Right ventricle myocardium inferior (tissue), 1 donor: ENCODE measurements at regions of chr5 and their contacts with region 1.

Region 1: DNA sequence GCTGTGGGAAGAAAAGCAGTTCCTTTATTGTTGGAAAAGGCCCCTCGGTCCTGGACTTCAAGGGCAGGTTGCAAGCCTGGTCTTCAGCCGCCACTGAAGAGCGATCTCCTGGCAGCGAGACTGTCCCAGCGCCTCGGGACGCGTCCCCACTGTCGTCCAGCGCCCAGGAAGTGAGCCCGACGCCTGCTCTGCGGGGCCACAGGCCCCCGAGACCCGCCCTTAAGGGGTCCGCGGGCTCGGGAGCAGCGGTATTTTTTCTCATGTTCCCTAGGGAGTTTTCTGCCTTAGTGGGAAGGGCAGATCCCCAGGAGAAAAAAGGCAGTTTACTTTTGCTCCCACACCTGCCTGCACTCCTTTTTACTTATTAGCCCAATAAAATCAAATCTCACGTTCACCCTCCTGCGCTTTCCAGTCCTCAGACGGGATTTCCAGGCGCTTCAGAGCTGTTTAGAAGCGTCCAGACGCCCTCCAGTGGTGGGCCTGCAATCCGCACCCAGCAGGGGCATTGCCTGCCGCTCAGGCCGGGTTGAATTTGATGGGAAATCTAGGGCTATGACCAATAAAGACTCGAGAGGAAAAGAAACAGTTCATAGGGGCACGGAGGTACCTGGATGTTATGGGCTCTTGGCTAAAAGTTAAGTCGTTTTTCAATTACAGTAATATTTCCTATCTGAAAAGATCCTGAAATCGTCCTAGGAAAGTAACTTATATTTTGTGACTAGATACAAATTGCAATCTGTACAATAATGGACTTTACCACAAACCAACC is 2.8 kb upstream of the EFNA5 start:
- DNase-seq: peak; percentile 82
- ATAC-seq: peak; percentile 70

Region 2: DNA sequence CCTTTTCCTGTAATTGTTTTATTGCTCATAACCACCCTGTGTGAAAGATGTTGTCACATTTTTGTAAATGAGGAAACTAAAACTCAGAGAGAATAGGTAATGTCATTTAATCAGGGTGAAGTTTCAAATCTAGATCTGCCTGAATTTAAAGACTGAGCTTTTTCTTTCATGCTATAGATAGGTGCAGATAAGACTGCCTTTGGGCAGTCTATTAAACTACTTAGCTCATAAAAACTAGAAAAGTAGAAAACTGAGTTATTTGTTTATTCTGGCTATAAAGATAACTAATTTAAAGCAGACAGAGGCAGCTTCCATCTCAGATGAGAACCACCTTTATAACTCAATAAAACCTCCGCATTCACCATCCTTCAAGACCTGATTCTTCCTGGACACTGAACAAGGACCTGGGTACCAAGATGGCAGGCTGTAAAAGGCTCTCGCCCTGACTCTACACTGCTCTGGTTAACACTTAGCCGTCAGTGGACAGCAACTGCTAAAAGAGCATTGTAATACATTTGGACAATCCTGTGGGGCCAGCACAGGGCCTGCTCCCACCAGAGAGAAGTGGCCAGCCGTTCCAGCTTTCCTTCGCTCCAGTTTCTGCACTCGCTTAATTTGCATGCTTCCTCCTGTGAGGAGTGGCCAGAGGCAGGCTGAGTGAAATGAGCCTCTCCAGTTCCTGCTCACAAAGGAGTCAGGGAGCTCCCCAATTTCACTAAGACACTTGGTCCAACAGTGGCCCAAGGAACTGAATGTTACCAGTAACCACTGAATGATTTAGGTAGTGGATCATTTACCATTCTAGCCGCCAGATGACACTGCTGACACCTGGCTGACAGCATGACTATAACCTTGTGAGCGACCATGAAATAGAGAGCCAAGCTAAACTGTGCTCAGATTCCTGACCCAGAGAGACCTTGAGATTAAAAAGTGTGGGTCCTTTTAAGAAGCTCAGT is 569.2 kb before region 1 on chr5:
- intact Hi-C with region 1: loop called (anchors 5 kb)
- DNase-seq: peak; percentile 28
- ATAC-seq: peak; percentile 94

Region 3: DNA sequence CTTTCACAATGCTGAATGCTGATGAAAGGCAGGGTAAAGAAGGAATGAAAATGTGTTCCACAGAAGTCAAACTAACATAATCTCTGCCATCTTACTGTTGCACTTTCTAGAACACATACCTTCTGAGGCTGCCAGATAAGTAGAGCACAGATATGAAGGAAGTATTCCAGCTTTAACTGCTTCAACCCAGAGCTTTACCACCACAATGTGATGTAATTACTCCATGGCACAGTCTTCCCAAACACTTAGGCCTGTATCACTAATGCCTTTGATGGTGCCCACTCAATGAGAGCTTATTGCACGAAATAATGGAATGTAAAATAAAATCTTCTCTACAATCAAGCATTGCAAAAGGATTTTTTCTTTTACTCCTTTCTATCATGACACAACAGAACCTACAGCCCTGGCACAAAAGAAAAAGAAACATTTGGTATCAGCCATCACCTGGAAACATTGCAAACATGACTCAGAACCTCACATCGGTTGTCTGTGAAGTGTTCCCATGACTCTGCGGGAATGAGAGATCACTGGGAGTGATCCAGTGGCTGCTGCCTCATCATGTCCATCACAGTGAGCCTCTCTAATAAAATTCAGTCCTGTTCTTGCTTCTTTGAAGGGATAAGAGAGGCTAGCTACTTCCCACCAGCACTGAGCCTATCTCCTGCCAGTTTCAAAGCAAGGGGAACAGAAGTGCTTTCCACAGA is 388.6 kb before region 1 on chr5:
- intact Hi-C with region 1: no loop called
- DNase-seq: no peak
- ATAC-seq: no peak

Region 4: DNA sequence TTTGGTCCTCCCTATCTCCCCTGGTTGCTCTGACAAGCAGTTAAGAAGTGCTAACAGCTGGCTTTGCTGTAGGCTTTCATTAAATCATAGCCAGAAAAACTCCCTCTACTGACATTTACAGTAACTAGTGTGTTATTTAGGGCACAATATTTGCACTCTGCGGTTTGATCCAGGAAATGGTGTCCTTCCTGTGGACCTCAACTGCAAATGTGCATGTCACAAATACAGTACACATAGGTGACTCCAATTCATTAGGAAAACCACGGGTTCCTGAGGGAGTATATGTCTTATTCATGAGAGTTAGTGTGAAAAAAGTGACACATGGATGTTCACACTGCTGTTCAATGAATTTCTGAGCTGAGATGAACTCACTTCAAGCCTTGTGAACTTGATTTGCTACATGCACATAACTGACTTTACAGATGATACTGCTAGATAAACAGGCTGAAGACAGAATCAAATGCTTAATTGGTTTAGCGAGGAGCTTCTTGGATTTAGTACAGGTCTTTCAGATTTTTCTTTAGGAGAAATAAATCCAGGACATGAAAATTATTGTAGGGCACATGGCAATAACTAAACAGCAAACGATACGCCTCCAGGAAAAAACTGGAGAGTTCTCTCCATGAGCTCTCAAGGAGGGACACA is 284.3 kb before region 1 on chr5:
- intact Hi-C with region 1: loop called (anchors 5 kb)
- DNase-seq: no peak
- ATAC-seq: peak; percentile 74

Region 5: GRCh38 chr5:107557051-107557658 is 116.4 kb before region 1 on chr5:
- intact Hi-C with region 1: loop called (anchors 5 kb)
- DNase-seq: peak; percentile 59
- ATAC-seq: peak; percentile 82

Region 6: GRCh38 chr5:108345541-108346171 is 672.1 kb after region 1 on chr5:
- intact Hi-C with region 1: loop called (anchors 10 kb)
- DNase-seq: no peak
- ATAC-seq: no peak